Gastrocnemius medialis (tissue), 4 donors: ENCODE measurements at regions of chr6 and their contacts with region 1.

Region 1: GRCh38 chr6:163579880-163580295 is 165.4 kb downstream of the QKI start:
- DNase-seq: peak; percentile 37 to 62
- ATAC-seq: peak; percentile 71 to 80
- H3K4me3 ChIP-seq: peak overlapping the region in 1 of 4 donors; percentile 19
- H3K27ac ChIP-seq: peak overlapping the region; percentile 81 to 88 (median 86)
- H3K4me1 ChIP-seq: peaks cover 43 to 56% of the 10 kb centered on the region in 2 donors
- H3K27me3 ChIP-seq: no peaks in the 10 kb centered on the region
- CTCF ChIP-seq: peak in 1 of 5 experiments; percentile 10
- POLR2A ChIP-seq: no peak

Region 2: GRCh38 chr6:163460307-163460782 is 119.5 kb before region 1 on chr6:
- in situ Hi-C with region 1: no loop called
- intact Hi-C with region 1: loop called (anchors 5 kb)
- DNase-seq: no peak
- ATAC-seq: peak; percentile 5 to 7
- H3K4me3 ChIP-seq: peak overlapping the region; percentile 34 to 56 (median 49)
- H3K27ac ChIP-seq: peak overlapping the region; percentile 76 to 98 (median 80)
- H3K4me1 ChIP-seq: peaks cover 88 to 92% of the 10 kb centered on the region in 2 donors
- H3K27me3 ChIP-seq: no peaks in the 10 kb centered on the region
- CTCF ChIP-seq: no peak
- POLR2A ChIP-seq: no peak

Region 3: DNA sequence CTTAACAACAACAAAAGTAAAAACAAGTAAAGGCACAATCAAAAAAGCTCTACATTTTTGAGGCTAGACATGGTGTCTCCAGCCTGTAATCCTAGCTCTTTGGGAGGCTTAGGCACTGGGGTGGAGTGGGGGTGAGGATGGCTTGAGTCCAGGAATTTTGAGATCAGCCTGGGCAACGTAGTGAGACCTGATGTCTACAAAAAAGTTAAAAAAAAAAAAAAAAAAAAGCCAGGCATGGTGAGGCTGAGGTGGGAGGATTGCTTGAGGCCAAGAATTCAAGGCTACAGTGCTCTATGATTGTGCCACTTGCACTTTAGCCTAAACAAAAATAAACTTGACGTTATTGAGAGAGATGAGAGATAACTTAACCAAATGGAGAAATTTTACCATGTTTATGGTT is 105.3 kb before region 1 on chr6:
- in situ Hi-C with region 1: no loop called
- intact Hi-C with region 1: no loop called
- DNase-seq: no peak
- ATAC-seq: no peak
- H3K4me3 ChIP-seq: no peak overlapping the region
- H3K27ac ChIP-seq: peak overlapping the region in 3 of 4 donors; percentile 45 to 76 (median 57)
- H3K4me1 ChIP-seq: peaks cover 67 to 69% of the 10 kb centered on the region in 2 donors
- H3K27me3 ChIP-seq: no peaks in the 10 kb centered on the region
- CTCF ChIP-seq: no peak
- POLR2A ChIP-seq: no peak

Region 4: DNA sequence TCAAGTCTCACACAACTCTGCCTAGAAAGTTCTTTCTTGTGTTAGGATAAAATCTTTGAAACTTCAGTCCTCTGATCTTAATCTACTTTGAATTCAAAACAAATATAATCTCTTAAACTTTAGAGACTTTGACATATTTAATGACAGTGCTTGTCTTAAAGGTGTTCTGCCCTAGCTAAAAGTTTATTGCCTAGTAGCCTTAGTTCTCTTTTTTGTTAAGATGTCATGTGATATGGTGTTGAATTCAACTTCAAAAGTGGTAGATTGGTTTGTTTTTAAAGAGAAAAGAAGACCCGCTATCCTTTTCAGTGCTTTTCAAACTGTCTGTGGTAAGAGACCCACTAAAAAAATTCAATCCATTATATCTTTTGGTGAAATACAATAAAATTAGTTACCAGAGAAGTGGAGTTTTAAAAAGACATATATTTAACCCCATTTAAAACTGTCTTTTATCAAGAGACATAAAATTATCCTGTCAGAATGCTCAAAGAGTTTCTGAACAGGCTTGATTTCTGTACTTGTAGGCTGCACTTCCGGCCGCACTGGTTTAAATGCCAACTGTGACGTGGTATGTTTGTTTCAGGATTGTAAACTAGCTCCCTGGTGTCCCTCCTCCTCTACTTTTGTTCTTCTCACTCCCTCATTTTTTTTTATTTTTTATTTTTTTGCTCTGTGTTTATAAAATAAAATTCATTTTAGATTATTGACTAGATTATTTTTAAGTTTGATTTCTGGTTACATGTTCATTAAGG is 88.9 kb before region 1 on chr6:
- in situ Hi-C with region 1: no loop called
- intact Hi-C with region 1: no loop called
- DNase-seq: peak; percentile 67 to 83
- ATAC-seq: peak; percentile 65 to 78
- H3K4me3 ChIP-seq: peak overlapping the region in 1 of 4 donors; percentile 17
- H3K27ac ChIP-seq: peak overlapping the region; percentile 76 to 84 (median 78)
- H3K4me1 ChIP-seq: peaks cover 97 to 98% of the 10 kb centered on the region in 2 donors
- H3K27me3 ChIP-seq: no peaks in the 10 kb centered on the region
- CTCF ChIP-seq: no peak
- POLR2A ChIP-seq: no peak